Activated T-helper 1 cell treated with anti-CD3 and anti-CD28 coated beads, Interleukin-12 subunit alpha, Interleukin-12 subunit beta, Interleukin-2, Interleukin-4 antibody, amounts not matched to agents 30 ng/mL and 10 ng/mL and 1 ng/mL, durations not matched to agents 14 hours and 24 hours and 36 hours (primary cell): ENCODE measurements at regions of chr2 and their contacts with region 1.

Region 1: DNA sequence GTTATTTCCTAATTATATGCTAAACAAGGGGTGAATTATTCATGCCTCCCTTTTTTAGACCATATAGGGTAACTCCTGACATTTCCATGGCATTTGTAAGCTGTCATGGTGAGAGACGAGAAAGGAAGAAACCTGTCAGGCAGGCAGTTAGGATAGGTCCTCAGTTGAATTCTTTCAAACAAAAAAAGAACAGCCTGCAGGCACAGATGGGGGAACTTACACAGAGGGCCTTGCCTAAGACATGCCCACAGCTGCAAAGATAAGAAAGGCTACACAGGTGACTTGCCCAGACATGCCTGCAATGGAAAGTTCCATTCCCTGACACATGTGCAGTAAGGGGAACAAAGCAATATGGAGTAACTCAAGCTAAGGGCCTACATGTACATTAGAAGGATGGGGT is 128.1 kb downstream of the TMEM163 start:
- DNase-seq: no peak
- H3K4me3 Mint-ChIP-seq: no peak overlapping the region
- H3K27ac Mint-ChIP-seq: no peak overlapping the region
- H3K4me1 Mint-ChIP-seq: no peaks in the 10 kb centered on the region
- H3K27me3 Mint-ChIP-seq: no peaks in the 10 kb centered on the region

Region 2: DNA sequence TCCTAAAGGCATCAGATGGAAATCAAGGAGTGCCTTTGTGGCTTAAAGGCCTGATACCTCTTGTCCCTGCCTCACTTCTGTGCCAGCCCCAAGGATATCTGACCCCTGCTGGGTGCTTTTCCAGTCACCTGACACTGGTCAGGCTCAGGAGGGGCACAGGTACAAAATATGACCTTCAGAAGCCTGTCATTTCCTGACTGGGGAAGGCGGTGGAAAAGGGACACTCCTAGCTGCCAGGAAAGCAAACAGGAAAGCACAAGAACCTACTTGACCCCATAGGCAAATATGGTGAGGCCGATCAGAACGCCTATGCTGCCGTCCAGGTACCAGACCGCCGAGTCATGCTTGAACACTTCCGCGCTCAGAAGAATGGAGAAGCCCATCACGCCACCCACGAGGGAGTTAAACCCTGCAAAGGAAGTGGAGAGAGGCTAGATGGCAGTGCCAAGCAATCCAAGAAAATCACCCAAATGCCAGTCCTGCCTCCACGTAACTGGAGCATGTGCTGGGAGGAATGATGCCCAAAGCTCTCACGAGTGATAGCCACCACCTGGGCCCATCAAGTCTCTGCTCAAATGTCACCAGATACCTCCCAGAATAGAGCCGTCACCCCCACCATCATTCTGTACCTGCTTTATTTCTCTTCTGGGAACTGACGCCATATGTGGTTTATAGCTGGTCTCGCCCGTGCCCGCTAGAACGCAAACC is 132.8 kb before region 1 on chr2:
- intact Hi-C with region 1: no loop called
- DNase-seq: no peak
- H3K4me3 Mint-ChIP-seq: no peak overlapping the region
- H3K27ac Mint-ChIP-seq: no peak overlapping the region
- H3K4me1 Mint-ChIP-seq: no peaks in the 10 kb centered on the region
- H3K27me3 Mint-ChIP-seq: no peaks in the 10 kb centered on the region

Region 3: GRCh38 chr2:134570676-134571075 is 20.0 kb before region 1 on chr2:
- intact Hi-C with region 1: loop called (anchors 2 kb)
- DNase-seq: no peak
- H3K4me3 Mint-ChIP-seq: no peak overlapping the region
- H3K27ac Mint-ChIP-seq: no peak overlapping the region
- H3K4me1 Mint-ChIP-seq: no peaks in the 10 kb centered on the region
- H3K27me3 Mint-ChIP-seq: peaks cover 13% of the 10 kb centered on the region